Lower lobe of right lung (tissue), 2 donors: ENCODE measurements at regions of chr1 and their contacts with region 1.

Region 1: GRCh38 chr1:113978863-113979702 is at the start of gene OLFML3:
- DNase-seq: peak; percentile 83
- ATAC-seq: peak; percentile 83 to 86
- H3K4me3 ChIP-seq: peak within 1 kb of the TSS; percentile 45
- H3K27ac ChIP-seq: peak within 1 kb of the TSS; percentile 65
- H3K4me1 ChIP-seq: peaks cover 63% of the 10 kb centered on the region
- H3K27me3 ChIP-seq: no peaks in the 10 kb centered on the region
- CTCF ChIP-seq: peak; percentile 70
- total RNA-seq, gene OLFML3: 38.9 TPM

Region 2: DNA sequence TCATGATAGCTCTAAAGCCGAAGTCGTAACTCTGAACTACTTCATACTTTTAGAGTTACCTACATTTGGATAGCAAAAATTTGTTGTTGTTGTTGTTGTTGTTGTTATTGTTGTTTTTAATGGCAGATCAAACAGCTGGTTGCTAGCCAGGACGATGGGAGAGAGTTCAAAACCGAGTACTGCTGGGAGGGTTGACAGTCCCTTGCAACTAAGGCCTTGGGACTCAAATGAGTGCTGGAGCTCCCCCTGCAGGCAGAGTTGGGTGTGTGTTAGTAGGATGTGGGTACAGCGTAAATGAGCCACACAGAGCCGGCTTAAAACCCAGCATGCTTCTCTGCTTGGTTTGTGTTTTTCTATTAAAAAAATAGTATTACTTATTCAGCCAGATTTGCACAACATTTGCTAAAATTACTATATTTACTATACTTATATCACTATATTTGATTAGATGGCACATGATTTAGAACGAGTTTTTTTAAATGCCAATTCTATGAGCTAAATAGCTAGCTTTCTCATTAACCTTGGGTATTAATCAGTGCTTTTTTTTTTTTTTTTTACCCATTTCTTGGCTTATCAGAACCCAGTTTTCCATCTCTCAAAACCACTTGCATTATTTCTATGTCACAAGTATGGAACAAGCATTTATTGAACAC is 303.8 kb after region 1 on chr1:
- intact Hi-C with region 1: loop called (anchors 10 kb)
- DNase-seq: peak; percentile 91
- ATAC-seq: peak; percentile 96 to 97
- H3K4me3 ChIP-seq: no peak overlapping the region
- H3K27ac ChIP-seq: no peak overlapping the region
- H3K4me1 ChIP-seq: no peaks in the 10 kb centered on the region
- H3K27me3 ChIP-seq: no peaks in the 10 kb centered on the region
- CTCF ChIP-seq: peak; percentile 87